Ovary (tissue), 10 donors: ENCODE measurements at regions of chr7 and their contacts with region 1.

Region 1: GRCh38 chr7:123209786-123210185 is 10.0 kb upstream of the SLC13A1 start:
- DNase-seq: no peak
- H3K4me3 ChIP-seq: no peak overlapping the region
- H3K27ac ChIP-seq: no peak overlapping the region
- H3K4me1 ChIP-seq: no peaks in the 10 kb centered on the region
- H3K27me3 ChIP-seq: no peaks in the 10 kb centered on the region
- CTCF ChIP-seq: no peak
- EP300 ChIP-seq: no peak
- POLR2A ChIP-seq: no peak

Region 2: DNA sequence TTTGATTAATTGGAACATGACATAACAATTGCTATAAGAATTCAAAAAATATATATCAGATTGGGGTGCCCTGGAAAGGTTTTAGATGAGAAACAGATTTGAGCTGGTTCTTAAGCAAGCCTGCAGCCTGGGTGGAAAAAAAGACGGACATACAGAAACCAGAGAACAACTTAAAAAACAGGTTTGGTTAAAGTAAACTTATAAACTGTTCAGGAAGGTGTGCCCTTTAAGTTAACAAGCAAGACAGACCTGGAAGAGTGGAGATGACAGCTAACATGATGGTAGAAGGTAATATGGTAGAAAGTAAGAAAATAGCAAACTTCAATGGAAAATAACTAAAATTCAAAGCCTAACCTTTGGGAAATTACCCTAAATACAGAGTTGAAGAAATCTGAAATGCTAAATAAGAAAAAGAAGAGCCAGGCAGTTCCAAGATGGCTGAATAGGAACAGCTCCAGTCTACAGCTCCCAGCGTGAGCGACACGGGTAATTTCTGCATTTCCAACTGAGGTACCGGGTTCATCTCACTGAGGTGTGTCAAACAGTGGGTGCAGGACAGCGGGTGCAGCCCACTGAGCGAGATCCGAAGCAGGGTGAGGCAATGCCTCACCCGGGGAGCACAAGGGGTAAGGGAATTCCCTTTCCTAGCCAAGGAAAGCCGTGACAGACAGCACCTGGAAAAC is 375.8 kb before region 1 on chr7:
- intact Hi-C with region 1: loop called in 1 of 4 experiments (anchors 5 kb)
- DNase-seq: no peak
- H3K4me3 ChIP-seq: no peak overlapping the region
- H3K27ac ChIP-seq: no peak overlapping the region
- H3K4me1 ChIP-seq: no peaks in the 10 kb centered on the region
- H3K27me3 ChIP-seq: no peaks in the 10 kb centered on the region
- CTCF ChIP-seq: no peak
- EP300 ChIP-seq: no peak
- POLR2A ChIP-seq: no peak

Region 3: DNA sequence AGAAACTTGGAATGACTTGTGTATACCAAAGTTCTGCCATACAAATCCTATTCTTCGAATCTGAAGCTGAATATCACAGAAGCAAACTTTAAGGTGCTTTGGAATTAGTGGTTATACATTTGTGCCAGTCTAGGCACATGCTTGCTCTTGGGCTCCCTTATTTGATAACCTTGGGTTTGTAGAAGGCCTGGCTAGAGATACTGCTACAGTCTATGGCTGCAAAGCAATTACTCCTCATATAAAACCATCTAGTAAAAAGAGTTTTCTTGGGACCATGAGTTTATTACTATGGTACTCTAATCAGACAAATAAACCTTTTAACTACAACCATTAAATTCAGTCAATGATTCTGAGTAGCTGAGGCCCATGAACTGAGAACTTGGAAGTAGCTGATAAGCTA is 82.4 kb after region 1 on chr7:
- intact Hi-C with region 1: no loop called
- DNase-seq: no peak
- H3K4me3 ChIP-seq: no peak overlapping the region
- H3K27ac ChIP-seq: no peak overlapping the region
- H3K4me1 ChIP-seq: no peaks in the 10 kb centered on the region
- H3K27me3 ChIP-seq: no peaks in the 10 kb centered on the region
- CTCF ChIP-seq: no peak
- EP300 ChIP-seq: no peak
- POLR2A ChIP-seq: no peak

Region 4: DNA sequence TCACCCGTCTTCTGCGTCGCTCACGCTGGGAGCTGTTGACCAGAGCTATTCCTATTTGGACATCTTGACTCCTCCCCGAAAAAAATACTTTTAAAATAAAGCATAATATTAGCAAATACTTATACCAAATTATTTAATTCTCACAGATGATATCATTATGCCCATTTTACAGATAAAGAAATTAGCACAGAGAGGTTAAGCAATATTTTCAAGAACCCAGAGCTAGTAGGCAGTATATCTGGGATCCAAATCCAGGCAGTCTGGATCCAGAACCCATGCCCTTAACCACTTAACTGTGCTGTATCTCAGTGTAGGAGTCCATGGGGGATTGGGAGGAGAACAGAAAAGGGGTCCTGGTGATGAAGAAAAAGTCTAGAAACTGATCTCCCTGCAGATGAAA is 318.5 kb after region 1 on chr7:
- intact Hi-C with region 1: no loop called
- DNase-seq: no peak
- H3K4me3 ChIP-seq: no peak overlapping the region
- H3K27ac ChIP-seq: no peak overlapping the region
- H3K4me1 ChIP-seq: no peaks in the 10 kb centered on the region
- H3K27me3 ChIP-seq: no peaks in the 10 kb centered on the region
- CTCF ChIP-seq: no peak
- EP300 ChIP-seq: no peak
- POLR2A ChIP-seq: no peak